ENCODE measurements at regions of chr2 and their contacts with region 1.

Region 1: GRCh38 chr2:47339745-47340541 is 63.0 kb upstream of the MSH2 start:
- DNase-seq: peak in 2 of 4 donors; percentile 39 to 76
- ATAC-seq: peak; percentile 55
- H3K4me3 ChIP-seq: no peak overlapping the region
- H3K27ac ChIP-seq: peak overlapping the region; percentile 41 to 43
- H3K4me1 ChIP-seq: peaks cover 0 to 10% of the 10 kb centered on the region in 2 donors
- H3K27me3 ChIP-seq: no peaks in the 10 kb centered on the region
- CTCF ChIP-seq: no peak

Region 2: DNA sequence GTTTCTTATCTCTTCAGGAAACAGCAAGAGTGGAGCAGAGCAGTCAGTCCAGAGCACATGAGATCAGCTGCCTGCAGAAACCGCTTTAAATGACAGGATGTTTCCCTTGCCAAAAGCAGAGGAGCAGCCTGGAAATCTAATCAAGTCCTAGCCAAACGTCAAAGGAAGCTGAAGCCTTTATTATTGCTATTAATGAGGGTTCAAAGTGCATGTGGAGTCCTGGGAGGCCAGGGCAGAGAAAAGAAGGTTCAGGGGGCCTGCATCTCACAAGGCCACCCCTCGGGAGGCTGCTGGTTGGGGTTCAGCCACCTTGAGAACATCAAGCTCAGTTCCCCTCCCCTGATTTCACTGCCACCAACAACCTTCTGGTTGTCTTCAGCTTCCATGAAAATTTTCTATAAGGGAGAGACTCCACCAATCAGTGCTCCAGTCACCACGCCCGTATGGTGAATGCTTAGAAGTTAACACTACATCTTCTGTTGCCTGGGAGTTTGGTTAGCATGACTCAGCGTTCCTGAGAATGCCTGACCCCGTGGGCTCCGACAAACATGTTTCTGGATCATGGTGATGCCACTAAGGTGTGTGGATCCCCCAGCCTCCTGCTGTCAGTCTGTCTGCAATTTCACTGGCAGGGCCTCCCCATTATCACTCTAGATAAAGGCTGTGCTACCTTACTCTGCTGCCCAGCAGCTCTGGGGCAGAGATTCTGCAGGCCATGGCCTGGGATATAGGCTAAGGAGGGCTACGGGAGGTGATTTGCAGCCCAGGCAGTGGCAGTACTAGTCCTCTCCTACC is 251.1 kb before region 1 on chr2:
- intact Hi-C with region 1: no loop called
- DNase-seq: peak in 2 of 4 donors; percentile 61 to 82
- ATAC-seq: peak; percentile 45
- H3K4me3 ChIP-seq: no peak overlapping the region
- H3K27ac ChIP-seq: no peak overlapping the region
- H3K4me1 ChIP-seq: peaks cover 9 to 30% of the 10 kb centered on the region in 2 donors
- H3K27me3 ChIP-seq: no peaks in the 10 kb centered on the region
- CTCF ChIP-seq: no peak

Region 3: GRCh38 chr2:47386551-47386950 is 46.6 kb after region 1 on chr2:
- intact Hi-C with region 1: loop called in 1 of 2 experiments (anchors 5 kb)
- DNase-seq: no peak
- ATAC-seq: no peak
- H3K4me3 ChIP-seq: no peak overlapping the region
- H3K27ac ChIP-seq: no peak overlapping the region
- H3K4me1 ChIP-seq: no peaks in the 10 kb centered on the region
- H3K27me3 ChIP-seq: no peaks in the 10 kb centered on the region
- CTCF ChIP-seq: no peak